ENCODE measurements at regions of chr1 and their contacts with region 1.

Region 1: GRCh38 chr1:17297991-17298390 is 10.0 kb upstream of the PADI4 start:
- DNase-seq: peak; percentile 73
- H3K4me3 ChIP-seq: no peak overlapping the region
- H3K27ac ChIP-seq: no peak overlapping the region
- H3K4me1 ChIP-seq: peaks cover 10% of the 10 kb centered on the region
- H3K27me3 ChIP-seq: no peaks in the 10 kb centered on the region
- CTCF ChIP-seq: no peak

Region 2: GRCh38 chr1:17201201-17202021 is 96.6 kb before region 1 on chr1:
- CTCF ChIA-PET with region 1: no interaction called
- dilution Hi-C with region 1: loop called (anchors 5 kb)
- in situ Hi-C with region 1: no loop called
- intact Hi-C with region 1: no loop called
- DNase-seq: no peak
- H3K4me3 ChIP-seq: no peak overlapping the region
- H3K27ac ChIP-seq: no peak overlapping the region
- H3K4me1 ChIP-seq: peaks cover 16% of the 10 kb centered on the region
- H3K27me3 ChIP-seq: no peaks in the 10 kb centered on the region
- CTCF ChIP-seq: no peak

Region 3: GRCh38 chr1:17259233-17259873 is 38.6 kb before region 1 on chr1:
- CTCF ChIA-PET with region 1: no interaction called
- dilution Hi-C with region 1: loop called (anchors 5 kb)
- in situ Hi-C with region 1: no loop called
- intact Hi-C with region 1: no loop called
- DNase-seq: no peak
- H3K4me3 ChIP-seq: no peak overlapping the region
- H3K27ac ChIP-seq: no peak overlapping the region
- H3K4me1 ChIP-seq: peaks cover 21% of the 10 kb centered on the region
- H3K27me3 ChIP-seq: no peaks in the 10 kb centered on the region
- CTCF ChIP-seq: no peak

Region 4: DNA sequence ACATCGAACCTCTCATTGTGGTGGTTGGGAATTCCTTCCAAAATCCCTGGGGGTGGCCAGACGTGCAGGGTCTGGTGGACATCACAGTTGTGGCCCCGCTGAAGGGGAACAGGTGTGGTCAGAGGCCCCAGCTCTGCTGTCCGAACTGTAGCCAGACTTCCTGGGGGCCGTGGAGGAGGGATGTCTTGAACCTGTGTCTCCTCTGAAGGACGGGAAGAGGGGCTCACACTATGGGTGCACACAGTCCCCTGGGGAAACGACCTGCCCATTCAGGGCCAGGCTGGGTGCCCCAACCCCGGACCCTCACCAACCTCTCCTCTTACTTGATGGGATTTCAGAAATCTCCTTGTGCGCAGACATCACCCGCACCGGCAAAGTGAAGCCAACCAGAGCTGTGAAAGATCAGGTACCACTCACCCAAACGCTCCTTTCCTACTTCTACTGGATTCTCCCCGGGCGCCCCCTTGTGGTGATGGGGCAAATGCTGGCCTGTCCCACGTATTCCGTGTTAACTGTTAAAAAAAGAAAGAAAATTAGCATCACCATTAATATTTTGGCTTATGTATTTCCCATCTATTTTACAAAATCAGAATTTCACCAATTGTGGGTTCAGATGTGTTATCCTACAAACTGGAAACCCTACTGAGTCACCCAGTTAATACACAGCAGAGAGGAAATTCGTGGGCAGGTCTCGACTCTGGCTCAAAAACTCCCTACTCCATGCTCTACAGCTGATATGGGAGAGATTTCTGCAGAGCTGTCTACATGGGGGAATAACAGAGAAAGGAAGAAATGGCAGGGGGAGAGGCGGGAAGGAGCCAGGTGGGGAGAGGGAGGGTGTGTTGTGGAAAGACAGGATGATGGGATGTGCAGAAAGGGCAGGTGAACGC is 38.1 kb after region 1 on chr1:
- CTCF ChIA-PET with region 1: no interaction called
- dilution Hi-C with region 1: no loop called
- in situ Hi-C with region 1: no loop called
- intact Hi-C with region 1: no loop called
- DNase-seq: peak; percentile 50
- H3K4me3 ChIP-seq: no peak overlapping the region
- H3K27ac ChIP-seq: no peak overlapping the region
- H3K4me1 ChIP-seq: peaks cover 11% of the 10 kb centered on the region
- H3K27me3 ChIP-seq: no peaks in the 10 kb centered on the region
- CTCF ChIP-seq: peak; percentile 93 to 94

Region 5: DNA sequence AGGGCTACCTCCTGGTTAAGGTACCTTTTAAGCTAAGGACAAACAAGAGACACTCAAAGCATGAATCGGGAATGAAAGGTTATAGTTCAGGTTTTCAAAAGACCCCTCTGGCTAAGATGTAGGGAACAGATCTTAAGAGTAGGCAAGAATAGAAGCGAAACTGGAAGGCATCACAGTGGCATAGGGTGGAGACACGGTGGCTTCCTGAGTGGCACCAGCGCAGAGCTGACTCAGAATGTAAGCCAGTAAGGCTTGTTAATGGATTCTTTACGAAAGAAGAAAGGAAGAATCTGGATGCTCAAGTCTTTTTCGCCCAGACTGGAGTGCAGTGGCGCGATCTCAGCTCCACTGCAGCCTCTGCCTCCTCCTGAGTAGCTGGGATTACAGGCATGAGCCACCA is 95.2 kb after region 1 on chr1:
- CTCF ChIA-PET with region 1: no interaction called
- dilution Hi-C with region 1: loop called (anchors 5 kb)
- in situ Hi-C with region 1: no loop called
- intact Hi-C with region 1: no loop called
- DNase-seq: no peak
- H3K4me3 ChIP-seq: no peak overlapping the region
- H3K27ac ChIP-seq: no peak overlapping the region
- H3K4me1 ChIP-seq: no peaks in the 10 kb centered on the region
- H3K27me3 ChIP-seq: no peaks in the 10 kb centered on the region
- CTCF ChIP-seq: no peak

Region 6: GRCh38 chr1:17515922-17516618 is 218.1 kb after region 1 on chr1:
- CTCF ChIA-PET with region 1: no interaction called
- dilution Hi-C with region 1: no loop called
- in situ Hi-C with region 1: no loop called
- intact Hi-C with region 1: no loop called
- DNase-seq: no peak
- H3K4me3 ChIP-seq: no peak overlapping the region
- H3K27ac ChIP-seq: no peak overlapping the region
- H3K4me1 ChIP-seq: peaks cover 12% of the 10 kb centered on the region
- H3K27me3 ChIP-seq: peaks cover 1% of the 10 kb centered on the region
- CTCF ChIP-seq: no peak